MCF 10A (cell line): ENCODE measurements at regions of chr3 and their contacts with region 1.

Region 1: DNA sequence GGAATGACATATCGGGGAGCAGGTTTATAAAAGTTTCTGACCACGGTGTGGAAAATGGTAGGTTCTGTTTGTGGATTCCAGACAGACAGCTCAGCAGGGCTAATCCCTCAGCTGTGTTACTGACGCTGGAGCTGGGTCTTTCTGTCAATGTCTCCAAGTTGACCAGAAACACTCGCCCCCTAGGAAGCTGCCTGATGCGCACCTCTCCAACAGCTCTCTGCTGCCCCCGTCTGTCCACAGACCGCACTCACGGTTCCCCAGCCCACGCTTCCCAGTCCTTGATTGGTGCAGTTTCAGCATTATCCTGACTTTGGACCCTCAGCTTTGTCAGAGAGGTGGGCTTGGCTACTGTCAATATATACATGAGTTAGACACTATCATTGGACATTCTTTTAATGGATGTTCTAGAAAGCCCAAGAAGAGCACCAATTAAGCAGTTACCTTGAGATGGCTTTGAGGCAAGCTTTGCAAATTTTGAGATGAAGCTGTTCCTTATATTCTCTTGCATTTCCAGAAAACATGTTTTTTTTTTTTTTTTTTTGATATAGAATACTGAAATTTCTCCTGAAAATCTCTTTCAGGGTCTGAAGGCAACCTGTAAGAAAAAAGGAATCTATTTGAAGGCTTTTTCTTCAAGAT is 98.9 kb upstream of the TBC1D5 start:
- DNase-seq: peak; percentile 67
- H3K4me3 Mint-ChIP-seq: no peak overlapping the region
- H3K27ac Mint-ChIP-seq: no peak overlapping the region
- H3K4me1 Mint-ChIP-seq: peaks cover 7% of the 10 kb centered on the region
- H3K27me3 Mint-ChIP-seq: no peaks in the 10 kb centered on the region
- CTCF ChIP-seq: peak; percentile 95

Region 2: DNA sequence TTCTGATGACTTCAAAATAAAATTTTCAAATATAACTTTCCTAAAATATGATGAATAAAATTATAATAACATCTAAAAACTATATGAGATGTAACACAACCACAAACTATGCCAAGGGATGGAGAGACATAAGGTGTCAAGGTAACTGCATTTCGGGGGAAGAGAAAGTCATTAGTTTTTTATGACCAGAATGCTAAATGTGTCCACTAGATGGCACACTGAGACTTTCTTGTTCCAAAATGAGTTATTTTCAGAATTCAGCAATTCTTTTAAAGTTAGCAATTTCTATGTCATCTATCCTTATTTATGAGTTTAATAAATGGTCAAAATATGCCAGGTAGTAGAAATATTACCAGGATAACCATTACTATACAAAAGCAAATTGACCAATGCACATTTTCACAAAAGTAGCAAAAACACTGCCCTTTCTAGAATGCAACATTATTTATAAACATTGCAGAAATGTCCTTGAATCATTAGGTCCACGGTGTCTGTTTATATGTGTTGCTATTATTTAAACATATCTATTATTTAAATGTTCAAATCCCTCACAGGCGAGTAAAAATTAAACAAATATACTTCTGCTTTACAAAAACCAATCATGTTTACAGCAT is 582.4 kb before region 1 on chr3:
- CTCF ChIA-PET with region 1: interaction called, 3 read pairs
- POLR2A ChIA-PET with region 1: interaction called, 4 read pairs
- intact Hi-C with region 1: loop called (anchors 2 kb)
- DNase-seq: peak; percentile 55
- H3K4me3 Mint-ChIP-seq: no peak overlapping the region
- H3K27ac Mint-ChIP-seq: no peak overlapping the region
- H3K4me1 Mint-ChIP-seq: no peaks in the 10 kb centered on the region
- H3K27me3 Mint-ChIP-seq: no peaks in the 10 kb centered on the region
- CTCF ChIP-seq: peak; percentile 51

Region 3: DNA sequence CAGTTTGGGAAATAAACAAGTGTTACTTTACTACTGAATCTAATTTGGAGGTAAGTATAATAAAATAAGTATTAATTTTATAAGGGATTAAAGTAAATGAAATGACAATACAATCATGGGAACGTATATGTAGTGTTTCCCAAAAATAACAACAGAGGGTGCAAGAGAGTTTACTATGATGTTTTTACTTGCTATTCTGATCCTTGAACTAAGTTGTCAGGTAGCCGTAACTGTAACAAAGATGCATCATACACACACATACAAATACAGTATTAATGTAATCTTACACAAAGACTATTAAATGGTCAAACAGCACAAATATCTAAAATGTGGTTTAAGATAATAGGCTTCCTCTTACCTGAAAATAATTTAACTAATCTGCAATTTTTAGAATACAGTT is 410.3 kb before region 1 on chr3:
- CTCF ChIA-PET with region 1: interaction called, 124 read pairs
- POLR2A ChIA-PET with region 1: interaction called, 3 read pairs
- intact Hi-C with region 1: loop called (anchors 1 kb)
- DNase-seq: peak; percentile 54
- H3K4me3 Mint-ChIP-seq: no peak overlapping the region
- H3K27ac Mint-ChIP-seq: no peak overlapping the region
- H3K4me1 Mint-ChIP-seq: peaks cover 4% of the 10 kb centered on the region
- H3K27me3 Mint-ChIP-seq: no peaks in the 10 kb centered on the region
- CTCF ChIP-seq: peak; percentile 42

Region 4: DNA sequence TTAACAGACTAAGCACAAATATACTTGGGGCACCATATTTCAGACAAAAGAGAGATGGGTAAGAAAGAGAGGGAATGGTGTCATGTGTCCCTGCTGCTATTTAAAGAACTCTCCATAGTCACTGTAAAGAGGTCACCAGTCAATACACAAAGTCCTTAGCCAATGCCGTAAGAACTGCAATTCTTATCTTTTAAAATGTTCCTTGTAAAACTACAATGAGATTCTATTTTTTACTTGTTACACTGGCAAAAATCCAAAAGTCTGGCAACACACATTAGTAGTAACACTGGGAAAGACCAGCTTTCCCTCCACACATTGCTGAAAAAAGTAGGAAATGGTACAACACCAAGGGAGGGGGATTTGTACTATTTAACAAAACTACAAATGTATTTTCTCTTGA is 288.2 kb before region 1 on chr3:
- CTCF ChIA-PET with region 1: interaction called, 15 read pairs
- POLR2A ChIA-PET with region 1: no interaction called
- intact Hi-C with region 1: no loop called
- DNase-seq: no peak
- H3K4me3 Mint-ChIP-seq: no peak overlapping the region
- H3K27ac Mint-ChIP-seq: no peak overlapping the region
- H3K4me1 Mint-ChIP-seq: no peaks in the 10 kb centered on the region
- H3K27me3 Mint-ChIP-seq: no peaks in the 10 kb centered on the region
- CTCF ChIP-seq: no peak

Region 5: GRCh38 chr3:17742108-17742879 is 99.0 kb before region 1 on chr3 and contains the start of gene TBC1D5:
- CTCF ChIA-PET with region 1: interaction called, 28 read pairs
- POLR2A ChIA-PET with region 1: interaction called, 7 read pairs
- intact Hi-C with region 1: no loop called
- DNase-seq: peak; percentile 97
- H3K4me3 Mint-ChIP-seq: peak within 1 kb of the TSS; percentile 93
- H3K27ac Mint-ChIP-seq: peak within 1 kb of the TSS; percentile 90
- H3K4me1 Mint-ChIP-seq: peaks cover 21% of the 10 kb centered on the region
- H3K27me3 Mint-ChIP-seq: no peaks in the 10 kb centered on the region
- CTCF ChIP-seq: no peak
- total RNA-seq, gene TBC1D5: 43.3 and 51.0 TPM in 2 replicates

Region 6: GRCh38 chr3:18024715-18025114 is 183.4 kb after region 1 on chr3:
- CTCF ChIA-PET with region 1: no interaction called
- POLR2A ChIA-PET with region 1: no interaction called
- intact Hi-C with region 1: no loop called
- DNase-seq: no peak
- H3K4me3 Mint-ChIP-seq: no peak overlapping the region
- H3K27ac Mint-ChIP-seq: no peak overlapping the region
- H3K4me1 Mint-ChIP-seq: no peaks in the 10 kb centered on the region
- H3K27me3 Mint-ChIP-seq: no peaks in the 10 kb centered on the region
- CTCF ChIP-seq: no peak

Region 7: DNA sequence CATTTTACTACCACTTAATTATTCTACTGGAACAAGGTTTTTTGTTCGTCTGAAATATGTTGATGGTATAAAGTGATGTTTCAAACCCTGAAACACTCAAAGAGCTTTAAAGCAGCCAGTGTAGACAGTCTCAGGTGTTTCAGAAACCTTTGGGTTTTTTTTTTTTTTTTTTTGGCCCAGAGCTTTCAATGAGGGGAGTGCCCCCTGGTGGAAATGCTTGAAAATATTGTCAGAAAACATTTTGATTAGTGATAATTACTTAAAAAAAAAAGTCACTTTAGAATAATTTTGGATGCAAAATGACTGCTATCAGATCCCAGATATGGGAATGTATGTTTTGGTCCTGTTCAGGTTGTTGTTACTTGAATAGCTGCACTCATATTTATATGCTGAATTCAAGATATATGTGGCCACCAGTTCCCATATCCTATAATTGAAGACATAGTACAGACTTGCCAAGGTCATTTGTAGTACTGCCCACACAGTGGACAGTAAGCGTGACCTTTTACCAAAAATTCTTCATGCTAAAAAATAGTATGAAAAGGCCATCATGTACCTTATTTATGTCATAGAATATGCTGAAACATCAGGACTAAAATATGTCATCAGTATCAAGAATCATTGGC is 547.9 kb after region 1 on chr3:
- CTCF ChIA-PET with region 1: interaction called, 10 read pairs
- POLR2A ChIA-PET with region 1: no interaction called
- intact Hi-C with region 1: no loop called
- DNase-seq: peak; percentile 44
- H3K4me3 Mint-ChIP-seq: no peak overlapping the region
- H3K27ac Mint-ChIP-seq: no peak overlapping the region
- H3K4me1 Mint-ChIP-seq: no peaks in the 10 kb centered on the region
- H3K27me3 Mint-ChIP-seq: peaks cover 6% of the 10 kb centered on the region
- CTCF ChIP-seq: peak; percentile 42